Activated T-helper 1 cell treated with anti-CD3 and anti-CD28 coated beads, Interleukin-12 subunit alpha, Interleukin-12 subunit beta, Interleukin-2, Interleukin-4 antibody, amounts not matched to agents 30 ng/mL and 10 ng/mL and 1 ng/mL, durations not matched to agents 14 hours and 24 hours and 36 hours (primary cell): ENCODE measurements at regions of chr6 and their contacts with region 1.

Region 1: GRCh38 chr6:35240840-35241801 is 18.4 kb upstream of the ZNF76 start:
- DNase-seq: peak; percentile 61
- H3K4me3 Mint-ChIP-seq: no peak overlapping the region
- H3K27ac Mint-ChIP-seq: no peak overlapping the region
- H3K4me1 Mint-ChIP-seq: peaks cover 7% of the 10 kb centered on the region
- H3K27me3 Mint-ChIP-seq: peaks cover 3% of the 10 kb centered on the region

Region 2: DNA sequence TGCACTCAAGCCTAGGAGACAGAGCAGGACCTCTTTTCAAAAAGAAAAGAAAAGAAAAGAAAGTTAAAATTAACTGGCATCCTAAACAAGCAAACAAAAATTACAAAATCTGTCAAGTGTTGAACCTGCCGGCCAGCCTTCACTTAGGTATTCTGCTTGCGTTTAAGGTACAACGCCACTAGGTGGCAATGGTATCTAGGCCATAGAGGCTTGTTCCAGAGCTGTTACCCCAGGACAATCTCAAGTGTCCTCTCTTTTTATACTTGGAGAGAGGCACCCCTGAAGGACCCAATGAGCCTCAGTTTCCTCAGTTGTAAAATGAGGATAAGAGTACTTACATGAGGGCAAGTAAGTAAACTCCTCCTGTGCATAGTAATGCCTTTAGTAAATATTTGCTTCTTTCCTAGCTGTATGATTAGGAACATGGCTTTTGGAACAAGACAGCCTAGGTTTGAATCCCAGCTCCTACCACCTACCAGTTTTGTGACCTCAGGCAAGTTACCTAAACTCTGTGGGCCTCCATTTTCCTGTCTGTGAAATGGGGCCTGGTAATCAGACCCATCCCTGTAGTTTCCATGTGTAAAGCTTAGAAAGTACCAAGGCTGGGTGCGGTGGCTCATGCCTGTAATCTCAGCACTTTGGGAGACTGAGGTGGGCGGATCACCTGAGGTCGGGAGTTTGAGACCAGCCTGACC is 781.1 kb before region 1 on chr6:
- intact Hi-C with region 1: loop called (anchors 2 kb)
- DNase-seq: peak; percentile 34
- H3K4me3 Mint-ChIP-seq: no peak overlapping the region
- H3K27ac Mint-ChIP-seq: no peak overlapping the region
- H3K4me1 Mint-ChIP-seq: no peaks in the 10 kb centered on the region
- H3K27me3 Mint-ChIP-seq: peaks cover 13% of the 10 kb centered on the region

Region 3: GRCh38 chr6:34986845-34987246 is 254.3 kb before region 1 on chr6:
- intact Hi-C with region 1: loop called (anchors 1 kb)
- DNase-seq: peak; percentile 37
- H3K4me3 Mint-ChIP-seq: no peak overlapping the region
- H3K27ac Mint-ChIP-seq: no peak overlapping the region
- H3K4me1 Mint-ChIP-seq: no peaks in the 10 kb centered on the region
- H3K27me3 Mint-ChIP-seq: no peaks in the 10 kb centered on the region

Region 4: DNA sequence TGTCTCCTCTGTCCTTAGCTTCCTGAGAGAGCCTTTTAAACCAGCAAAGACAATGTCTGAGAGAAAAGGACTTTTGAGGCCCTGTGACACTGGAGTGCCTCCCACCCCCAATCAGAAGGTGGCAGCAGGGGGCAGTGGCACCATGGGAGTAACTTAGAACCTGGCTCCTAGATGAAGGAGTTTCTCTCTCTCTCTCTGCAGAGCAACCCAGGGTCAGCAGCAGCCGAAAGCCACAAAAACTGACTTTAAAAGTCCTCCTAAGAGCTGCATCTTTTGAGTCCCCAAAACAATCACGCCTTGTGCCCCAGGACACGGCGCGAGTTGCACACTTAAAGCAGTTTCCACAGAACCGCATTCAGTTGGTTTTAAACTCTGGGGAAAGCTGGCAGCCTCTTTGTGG is 94.7 kb before region 1 on chr6:
- intact Hi-C with region 1: loop called (anchors 1 kb)
- DNase-seq: no peak
- H3K4me3 Mint-ChIP-seq: no peak overlapping the region
- H3K27ac Mint-ChIP-seq: no peak overlapping the region
- H3K4me1 Mint-ChIP-seq: peaks cover 48% of the 10 kb centered on the region
- H3K27me3 Mint-ChIP-seq: peaks cover 5% of the 10 kb centered on the region

Region 5: DNA sequence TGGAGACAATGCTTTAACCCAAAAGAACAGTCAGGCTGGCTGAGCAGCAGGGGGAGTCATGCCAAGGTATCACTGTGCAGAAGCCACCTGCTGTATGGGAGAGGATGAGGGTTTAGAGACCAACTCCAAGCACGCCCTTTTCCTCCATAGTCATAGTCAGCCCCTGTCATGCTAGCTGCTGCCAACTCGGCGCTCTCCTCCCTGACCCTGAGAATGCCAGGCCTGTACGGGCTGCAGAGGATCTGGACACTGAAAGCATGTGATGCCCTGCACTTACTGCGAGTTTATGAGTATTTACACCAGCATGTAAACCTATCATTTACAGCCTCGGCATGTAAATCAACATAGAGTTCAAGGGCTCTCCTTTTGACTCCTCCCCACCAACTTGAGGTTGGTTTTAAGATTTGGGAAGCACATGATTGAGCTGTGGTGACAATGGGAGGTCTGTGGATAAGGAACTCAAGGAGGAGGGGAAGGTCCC is 39.0 kb before region 1 on chr6:
- intact Hi-C with region 1: loop called (anchors 2 kb)
- DNase-seq: no peak
- H3K4me3 Mint-ChIP-seq: no peak overlapping the region
- H3K27ac Mint-ChIP-seq: no peak overlapping the region
- H3K4me1 Mint-ChIP-seq: no peaks in the 10 kb centered on the region
- H3K27me3 Mint-ChIP-seq: peaks cover 33% of the 10 kb centered on the region

Region 6: GRCh38 chr6:35359751-35360348 is 118.7 kb after region 1 on chr6:
- intact Hi-C with region 1: no loop called
- DNase-seq: no peak
- H3K4me3 Mint-ChIP-seq: no peak overlapping the region
- H3K27ac Mint-ChIP-seq: no peak overlapping the region
- H3K4me1 Mint-ChIP-seq: peaks cover 12% of the 10 kb centered on the region
- H3K27me3 Mint-ChIP-seq: no peaks in the 10 kb centered on the region

Region 7: GRCh38 chr6:35452186-35453090 is 211.3 kb after region 1 on chr6 and contains the start of gene FANCE:
- intact Hi-C with region 1: no loop called
- DNase-seq: peak; percentile 91
- H3K4me3 Mint-ChIP-seq: peak within 1 kb of the TSS; percentile 88
- H3K27ac Mint-ChIP-seq: peak within 1 kb of the TSS; percentile 61
- H3K4me1 Mint-ChIP-seq: peaks cover 48% of the 10 kb centered on the region
- H3K27me3 Mint-ChIP-seq: no peaks in the 10 kb centered on the region
- total RNA-seq, gene FANCE: 21.9 and 22.3 TPM in 2 replicates